ENCODE measurements at regions of chr5 and their contacts with region 1.

Region 1: DNA sequence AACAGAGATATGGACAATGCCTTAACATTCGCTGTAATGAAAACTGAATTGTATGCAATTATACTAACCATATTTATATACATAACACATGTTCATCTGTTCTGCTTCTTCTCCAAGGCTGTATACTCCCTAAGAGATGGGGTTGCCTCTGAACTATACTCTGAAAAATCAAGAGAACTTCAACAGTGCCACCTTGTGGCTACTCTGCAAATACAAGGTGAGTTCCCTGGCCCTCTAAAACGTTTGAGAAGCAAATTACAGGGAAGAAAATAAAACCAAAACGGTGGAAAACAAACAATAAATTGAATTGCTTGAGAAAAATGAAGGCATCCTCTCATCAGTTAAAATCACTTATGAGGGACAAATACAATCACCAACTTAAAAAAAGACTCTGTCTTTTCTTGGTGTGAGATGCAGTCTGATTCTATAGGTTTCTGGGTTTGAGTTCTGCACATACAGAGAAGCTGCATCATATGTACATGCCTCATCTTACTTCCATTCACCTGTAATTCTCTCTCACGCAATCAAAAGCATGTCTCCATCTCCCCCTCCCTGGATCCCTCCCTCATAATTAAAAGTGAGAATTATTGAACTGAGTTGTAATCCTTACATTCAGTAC is 98.6 kb downstream of the FBXW11 start:
- DNase-seq: peak; percentile 37 to 56
- H3K4me3 ChIP-seq: no peak overlapping the region
- H3K27ac ChIP-seq: no peak overlapping the region
- H3K4me1 ChIP-seq: no peaks in the 10 kb centered on the region
- H3K27me3 ChIP-seq: no peaks in the 10 kb centered on the region
- CTCF ChIP-seq: peak; percentile 87

Region 2: GRCh38 chr5:171484460-171484899 is 423.4 kb before region 1 on chr5:
- CTCF ChIA-PET with region 1: no interaction called
- POLR2A ChIA-PET with region 1: no interaction called
- intact Hi-C with region 1: loop called (anchors 2 kb)
- DNase-seq: peak in 1 of 2 experiments; percentile 46
- H3K4me3 ChIP-seq: no peak overlapping the region
- H3K27ac ChIP-seq: no peak overlapping the region
- H3K4me1 ChIP-seq: 0 out of 2 replicates have a peak, but pooled peaks cover 4% of the 10 kb centered on the region
- H3K27me3 ChIP-seq: no peaks in the 10 kb centered on the region
- CTCF ChIP-seq: peak; percentile 97

Region 3: DNA sequence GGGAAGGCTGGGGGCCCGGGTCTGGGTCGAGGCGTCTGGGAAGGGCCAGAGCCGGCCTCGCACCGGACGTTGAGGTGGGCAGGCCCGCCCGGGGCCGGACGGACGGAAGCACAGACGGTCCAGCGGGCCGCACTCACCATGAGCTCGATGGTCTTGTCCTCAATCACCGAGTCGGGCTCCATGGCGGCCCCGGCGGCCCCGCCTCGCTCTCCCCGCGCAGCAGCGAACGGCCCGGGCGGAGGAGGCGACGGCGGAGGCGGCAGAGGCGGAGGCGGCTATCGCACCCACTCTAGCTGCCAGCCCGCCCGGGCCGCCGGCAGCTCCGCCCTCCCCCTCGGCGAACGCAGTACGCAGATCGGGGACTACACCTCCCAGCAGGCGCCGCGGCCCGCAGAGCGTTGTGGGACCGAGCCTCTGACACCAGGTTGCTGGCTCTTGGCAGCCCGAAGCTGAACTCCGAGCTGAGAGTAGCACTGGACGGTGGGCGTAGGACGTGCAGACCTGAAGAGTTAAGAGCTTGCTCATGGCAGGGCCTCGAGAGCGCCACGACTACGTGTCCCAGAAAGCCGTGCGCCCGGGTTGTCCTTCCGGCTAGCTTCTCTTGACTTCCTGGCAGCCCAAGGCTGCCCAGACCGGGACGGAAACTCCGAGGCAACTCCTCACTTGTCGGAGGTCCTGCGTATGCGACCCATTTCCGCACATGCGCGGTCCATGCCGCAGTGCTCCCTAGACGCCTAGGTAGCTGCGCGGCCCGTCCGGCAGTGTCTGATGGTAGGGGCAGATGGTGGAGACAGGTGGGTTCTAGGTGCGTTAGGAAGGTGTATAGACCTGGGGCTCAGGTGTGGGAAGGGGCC is 98.7 kb after region 1 on chr5 and contains the start of gene FBXW11:
- CTCF ChIA-PET with region 1: interaction called, 8 read pairs
- POLR2A ChIA-PET with region 1: interaction called, 5 read pairs
- intact Hi-C with region 1: loop called (anchors 1 kb)
- DNase-seq: peak; percentile 95 to 96
- H3K4me3 ChIP-seq: peak within 1 kb of the TSS; percentile 86
- H3K27ac ChIP-seq: peak within 1 kb of the TSS; percentile 68
- H3K4me1 ChIP-seq: peaks cover 29% of the 10 kb centered on the region
- H3K27me3 ChIP-seq: no peaks in the 10 kb centered on the region
- CTCF ChIP-seq: no peak
- total RNA-seq, gene FBXW11: 54.8 and 58.7 TPM in 2 replicates

Region 4: GRCh38 chr5:172059661-172060100 is 151.8 kb after region 1 on chr5:
- CTCF ChIA-PET with region 1: interaction called, 13 read pairs
- POLR2A ChIA-PET with region 1: no interaction called
- intact Hi-C with region 1: no loop called
- DNase-seq: no peak
- H3K4me3 ChIP-seq: no peak overlapping the region
- H3K27ac ChIP-seq: no peak overlapping the region
- H3K4me1 ChIP-seq: no peaks in the 10 kb centered on the region
- H3K27me3 ChIP-seq: no peaks in the 10 kb centered on the region
- CTCF ChIP-seq: peak; percentile 72

Region 5: GRCh38 chr5:172293054-172293744 is 385.4 kb after region 1 on chr5:
- CTCF ChIA-PET with region 1: interaction called, 3 read pairs
- POLR2A ChIA-PET with region 1: no interaction called
- intact Hi-C with region 1: loop called (anchors 1 kb)
- DNase-seq: peak; percentile 51 to 66
- H3K4me3 ChIP-seq: no peak overlapping the region
- H3K27ac ChIP-seq: no peak overlapping the region
- H3K4me1 ChIP-seq: 0 out of 2 replicates have a peak, but pooled peaks cover 4% of the 10 kb centered on the region
- H3K27me3 ChIP-seq: no peaks in the 10 kb centered on the region
- CTCF ChIP-seq: peak; percentile 89

Measured in PC-9 (cell line).